Gastrocnemius medialis (tissue), 4 donors: ENCODE measurements at regions of chr1 and their contacts with region 1.

Region 1: GRCh38 chr1:150925816-150926741 is at the start of gene SETDB1:
- DNase-seq: peak; percentile 95 to 97
- ATAC-seq: peak; percentile 98 to 99
- H3K4me3 ChIP-seq: peak within 1 kb of the TSS; percentile 82 to 96 (median 91)
- H3K27ac ChIP-seq: peak within 1 kb of the TSS; percentile 91 to 95 (median 92)
- H3K4me1 ChIP-seq: peaks cover 6 to 10% of the 10 kb centered on the region in 2 donors
- H3K27me3 ChIP-seq: no peaks in the 10 kb centered on the region
- CTCF ChIP-seq: peak in 1 of 5 experiments; percentile 16
- POLR2A ChIP-seq: peak; percentile 36 to 41
- total RNA-seq, gene SETDB1: 13.7 to 20.8 (median 17.3) TPM

Region 2: GRCh38 chr1:150363426-150364230 is 562.5 kb before region 1 on chr1 and contains the start of gene RPRD2:
- in situ Hi-C with region 1: no loop called
- intact Hi-C with region 1: loop called (anchors 10 kb)
- DNase-seq: peak; percentile 100
- ATAC-seq: peak; percentile 91 to 93
- H3K4me3 ChIP-seq: peak within 1 kb of the TSS; percentile 82 to 93 (median 84)
- H3K27ac ChIP-seq: peak within 1 kb of the TSS; percentile 93 to 97 (median 96)
- H3K4me1 ChIP-seq: peaks cover 23% of the 10 kb centered on the region in 2 donors
- H3K27me3 ChIP-seq: no peaks in the 10 kb centered on the region
- CTCF ChIP-seq: peak in 1 of 5 experiments; percentile 14
- POLR2A ChIP-seq: peak; percentile 51 to 56
- total RNA-seq, gene RPRD2: 18.0 to 28.0 (median 23.1) TPM

Region 3: GRCh38 chr1:150507905-150508854 is 417.9 kb before region 1 on chr1 and contains the start of gene ECM1:
- in situ Hi-C with region 1: no loop called
- intact Hi-C with region 1: no loop called
- DNase-seq: peak; percentile 44 to 63
- ATAC-seq: peak; percentile 84 to 86
- H3K4me3 ChIP-seq: peak within 1 kb of the TSS in 3 of 4 donors; percentile 19 to 33 (median 21)
- H3K27ac ChIP-seq: peak within 1 kb of the TSS; percentile 63 to 76 (median 71)
- H3K4me1 ChIP-seq: peaks cover 0 to 7% of the 10 kb centered on the region in 2 donors
- H3K27me3 ChIP-seq: no peaks in the 10 kb centered on the region
- CTCF ChIP-seq: no peak
- POLR2A ChIP-seq: no peak
- total RNA-seq, gene ECM1: 1.5 to 8.5 (median 5.6) TPM

Region 4: GRCh38 chr1:150578965-150579798 is 346.9 kb before region 1 on chr1 and contains the start of gene MCL1:
- in situ Hi-C with region 1: no loop called
- intact Hi-C with region 1: loop called (anchors 1 kb)
- DNase-seq: peak; percentile 94 to 95
- ATAC-seq: peak; percentile 68 to 71
- H3K4me3 ChIP-seq: peak within 1 kb of the TSS; percentile 67 to 98 (median 84)
- H3K27ac ChIP-seq: peak within 1 kb of the TSS; percentile 100
- H3K4me1 ChIP-seq: peaks cover 21 to 25% of the 10 kb centered on the region in 2 donors
- H3K27me3 ChIP-seq: no peaks in the 10 kb centered on the region
- CTCF ChIP-seq: peak in 2 of 5 experiments; percentile 27 to 32
- POLR2A ChIP-seq: peak; percentile 98 to 99
- total RNA-seq, gene MCL1: 136 to 199 (median 176) TPM

Region 5: GRCh38 chr1:150876119-150876454 is 50.0 kb before region 1 on chr1:
- in situ Hi-C with region 1: loop called in 1 of 4 experiments (anchors 10 kb)
- intact Hi-C with region 1: loop called (anchors 1 kb)
- DNase-seq: peak in 1 of 2 donors; percentile 59
- ATAC-seq: peak; percentile 35 to 53
- H3K4me3 ChIP-seq: peak overlapping the region; percentile 95 to 100 (median 99)
- H3K27ac ChIP-seq: peak overlapping the region; percentile 99 to 100 (median 100)
- H3K4me1 ChIP-seq: peaks cover 15 to 19% of the 10 kb centered on the region in 2 donors
- H3K27me3 ChIP-seq: no peaks in the 10 kb centered on the region
- CTCF ChIP-seq: no peak
- POLR2A ChIP-seq: no peak

Region 6: GRCh38 chr1:150895601-150896000 is 30.5 kb before region 1 on chr1:
- in situ Hi-C with region 1: no loop called
- intact Hi-C with region 1: loop called (anchors 1 kb)
- DNase-seq: peak; percentile 72 to 89
- ATAC-seq: peak; percentile 100
- H3K4me3 ChIP-seq: no peak overlapping the region
- H3K27ac ChIP-seq: peak overlapping the region; percentile 81 to 90 (median 86)
- H3K4me1 ChIP-seq: peaks cover 6 to 8% of the 10 kb centered on the region in 2 donors
- H3K27me3 ChIP-seq: no peaks in the 10 kb centered on the region
- CTCF ChIP-seq: no peak
- POLR2A ChIP-seq: no peak

Region 7: DNA sequence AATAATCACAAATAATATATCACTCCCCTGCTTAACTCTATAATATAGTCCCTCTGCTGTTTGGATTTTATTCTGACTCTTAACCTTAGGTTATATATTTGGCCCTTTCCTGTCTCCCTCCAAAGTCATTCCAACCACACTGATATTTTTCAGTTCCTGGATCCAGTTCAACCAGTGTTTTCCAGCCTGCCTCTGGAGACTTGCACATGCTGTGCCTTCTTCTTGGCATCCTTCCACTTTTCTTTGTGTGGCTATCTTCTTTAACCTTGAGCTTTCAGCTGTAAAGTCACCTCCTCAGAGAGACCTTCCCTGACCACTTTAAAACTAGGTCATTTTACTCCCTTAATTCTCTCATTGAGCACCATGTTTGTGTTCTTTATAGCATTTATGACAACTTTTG is 29.2 kb after region 1 on chr1:
- in situ Hi-C with region 1: no loop called
- intact Hi-C with region 1: no loop called
- DNase-seq: no peak
- ATAC-seq: no peak
- H3K4me3 ChIP-seq: no peak overlapping the region
- H3K27ac ChIP-seq: no peak overlapping the region
- H3K4me1 ChIP-seq: no peaks in the 10 kb centered on the region
- H3K27me3 ChIP-seq: no peaks in the 10 kb centered on the region
- CTCF ChIP-seq: no peak
- POLR2A ChIP-seq: no peak

Region 8: DNA sequence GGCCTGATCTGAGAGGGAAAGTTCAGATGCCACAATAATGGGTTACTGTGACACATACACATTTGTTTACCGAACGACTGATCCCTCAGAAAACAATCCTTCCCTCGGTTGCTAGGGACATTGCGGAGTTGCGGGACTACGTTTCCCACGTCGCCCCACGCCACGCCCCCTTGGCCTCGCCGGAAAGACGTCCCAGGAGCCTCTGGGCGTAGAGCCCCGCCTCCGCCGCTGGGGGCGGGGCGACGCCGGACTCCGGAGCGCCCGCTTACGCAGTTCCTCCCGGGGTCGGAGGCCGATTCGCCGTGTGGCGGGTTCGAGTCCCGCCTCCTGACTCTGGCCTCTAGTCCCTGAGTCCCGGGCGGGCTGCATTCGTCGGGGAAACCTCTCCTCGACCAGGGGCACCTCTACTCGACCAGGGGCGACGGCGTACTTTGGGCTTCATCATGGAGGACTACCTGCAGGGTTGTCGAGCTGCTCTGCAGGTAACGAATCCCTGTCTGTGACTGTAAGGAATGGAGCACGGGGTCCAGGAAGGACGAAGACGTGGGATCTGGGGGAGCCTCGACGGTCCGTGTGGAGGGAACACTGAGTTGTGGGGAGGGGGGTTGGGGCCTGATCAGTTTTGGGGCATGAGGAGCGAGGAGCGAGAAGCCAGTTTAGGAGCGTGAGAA is 82.2 kb after region 1 on chr1 and contains the start of gene PRUNE1:
- in situ Hi-C with region 1: no loop called
- intact Hi-C with region 1: loop called (anchors 5 kb)
- DNase-seq: peak; percentile 93 to 96
- ATAC-seq: peak; percentile 79 to 80
- H3K4me3 ChIP-seq: peak within 1 kb of the TSS; percentile 60 to 91 (median 86)
- H3K27ac ChIP-seq: peak within 1 kb of the TSS; percentile 89 to 95 (median 94)
- H3K4me1 ChIP-seq: peaks cover 54 to 62% of the 10 kb centered on the region in 2 donors
- H3K27me3 ChIP-seq: no peaks in the 10 kb centered on the region
- CTCF ChIP-seq: peak in 4 of 5 experiments; percentile 24 to 33 (median 26)
- POLR2A ChIP-seq: peak; percentile 65 to 72
- total RNA-seq, gene PRUNE1: 24.0 to 35.6 (median 29.1) TPM